ENCODE measurements at regions of chr17 and their contacts with region 1.

Region 1: GRCh38 chr17:45317112-45317928 is 500 bp upstream of the MAP3K14 start:
- DNase-seq: peak; percentile 100
- ATAC-seq: peak; percentile 84 to 85
- H3K4me3 ChIP-seq: peak overlapping the region; percentile 41 to 74 (median 62)
- H3K27ac ChIP-seq: peak overlapping the region; percentile 86 to 98 (median 92)
- H3K4me1 ChIP-seq: peaks cover 43 to 45% of the 10 kb centered on the region in 2 donors
- H3K27me3 ChIP-seq: no peaks in the 10 kb centered on the region
- CTCF ChIP-seq: peak in 1 of 5 experiments; percentile 6
- POLR2A ChIP-seq: no peak

Region 2: GRCh38 chr17:44749076-44749979 is 568.0 kb before region 1 on chr17:
- in situ Hi-C with region 1: no loop called
- intact Hi-C with region 1: no loop called
- DNase-seq: no peak
- ATAC-seq: no peak
- H3K4me3 ChIP-seq: no peak overlapping the region
- H3K27ac ChIP-seq: no peak overlapping the region
- H3K4me1 ChIP-seq: no peaks in the 10 kb centered on the region
- H3K27me3 ChIP-seq: no peaks in the 10 kb centered on the region
- CTCF ChIP-seq: no peak
- POLR2A ChIP-seq: no peak

Region 3: DNA sequence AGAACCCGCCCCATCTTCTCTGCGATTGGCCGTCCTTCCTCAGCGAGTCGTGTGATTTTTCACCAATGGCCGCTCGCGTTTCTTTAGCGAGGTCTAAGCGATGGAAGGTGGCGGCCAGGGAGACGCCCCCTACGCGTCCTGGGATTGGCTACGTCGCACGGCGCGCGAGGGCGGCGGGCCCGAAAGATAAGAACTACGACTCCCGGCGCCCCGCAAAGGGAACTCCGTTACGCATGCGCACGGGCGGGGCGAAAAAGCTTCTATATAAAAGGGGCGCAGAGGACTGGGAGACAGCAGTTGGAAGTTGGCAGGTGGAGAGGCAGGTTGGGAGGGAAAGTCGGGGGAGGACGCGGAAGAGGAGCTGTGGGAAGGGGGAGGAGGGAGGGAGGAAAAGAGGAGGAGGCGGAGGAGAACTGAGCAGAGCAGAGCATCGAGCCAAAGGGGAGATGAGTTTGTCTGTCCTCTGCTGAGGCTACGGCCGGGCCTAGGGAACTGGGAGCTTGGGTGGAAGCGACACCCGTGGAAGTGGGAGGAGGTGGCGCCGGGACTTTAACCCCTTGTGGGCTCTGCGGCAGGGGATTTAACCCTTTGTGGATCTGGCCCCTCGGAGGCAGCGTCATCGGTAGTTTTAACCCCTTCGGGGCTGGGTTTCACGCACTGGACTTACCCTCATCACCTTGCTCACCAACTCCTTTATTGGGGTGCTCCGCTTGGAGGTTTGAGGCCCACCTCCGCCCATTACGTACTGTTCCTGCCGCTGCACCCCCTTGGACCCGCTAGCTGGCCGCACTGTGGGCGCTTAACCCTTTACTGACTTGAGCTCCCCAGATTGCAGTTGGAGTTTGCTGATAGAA is 168.9 kb before region 1 on chr17 and contains the start of gene HEXIM1:
- in situ Hi-C with region 1: no loop called
- intact Hi-C with region 1: loop called (anchors 1 kb)
- DNase-seq: peak; percentile 99 to 100
- ATAC-seq: peak; percentile 70
- H3K4me3 ChIP-seq: peak within 1 kb of the TSS; percentile 80 to 88 (median 84)
- H3K27ac ChIP-seq: peak within 1 kb of the TSS; percentile 90 to 98 (median 98)
- H3K4me1 ChIP-seq: peaks cover 36 to 50% of the 10 kb centered on the region in 2 donors
- H3K27me3 ChIP-seq: no peaks in the 10 kb centered on the region
- CTCF ChIP-seq: peak in 1 of 5 experiments; percentile 5
- POLR2A ChIP-seq: peak; percentile 99 to 100
- total RNA-seq, gene HEXIM1: 26.3 to 79.6 (median 36.9) TPM

Region 4: DNA sequence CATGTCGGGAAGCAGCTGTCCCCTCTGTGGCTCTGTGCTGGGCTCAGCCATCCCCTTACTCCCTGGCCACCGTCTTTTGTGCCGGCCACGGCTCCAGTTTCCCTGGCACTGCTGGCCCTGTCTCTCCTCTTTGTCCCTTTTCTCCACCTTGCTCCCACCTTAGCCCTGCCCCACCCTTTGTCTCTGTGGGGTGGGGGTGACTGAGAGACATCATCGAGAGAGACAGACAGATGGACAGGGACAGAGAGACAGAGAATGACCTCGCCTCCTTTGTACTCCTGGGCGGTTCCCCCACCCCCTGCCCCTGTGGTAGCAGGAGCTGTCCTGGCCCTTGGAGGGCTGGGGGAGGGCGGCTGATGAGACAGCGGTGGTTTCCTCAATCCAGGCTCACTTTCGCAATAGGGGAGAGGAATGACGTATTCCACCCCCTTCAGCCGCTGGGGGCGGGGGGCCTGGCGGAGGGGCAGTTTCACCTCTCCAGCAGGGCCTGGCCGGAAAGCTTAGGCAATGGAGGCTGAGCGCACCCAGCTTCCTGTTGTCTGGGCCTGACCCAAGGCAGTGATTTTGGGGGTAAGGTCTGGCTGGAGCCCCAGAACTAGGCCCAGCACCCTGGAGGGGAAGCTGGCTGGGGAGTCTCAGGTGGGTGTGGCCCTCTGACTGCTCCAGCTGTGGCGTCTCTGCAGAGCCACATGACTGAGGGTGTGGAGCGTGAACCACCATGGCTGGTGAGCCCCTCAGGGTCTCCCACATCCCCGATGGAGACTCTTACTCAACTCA is 88.4 kb before region 1 on chr17:
- in situ Hi-C with region 1: loop called in 1 of 4 experiments (anchors 10 kb)
- intact Hi-C with region 1: no loop called
- DNase-seq: peak; percentile 76 to 83
- ATAC-seq: peak; percentile 58 to 71
- H3K4me3 ChIP-seq: no peak overlapping the region
- H3K27ac ChIP-seq: peak overlapping the region; percentile 62 to 81 (median 74)
- H3K4me1 ChIP-seq: peaks cover 38 to 40% of the 10 kb centered on the region in 2 donors
- H3K27me3 ChIP-seq: no peaks in the 10 kb centered on the region
- CTCF ChIP-seq: no peak
- POLR2A ChIP-seq: peak in 1 of 2 donors; percentile 38

Region 5: DNA sequence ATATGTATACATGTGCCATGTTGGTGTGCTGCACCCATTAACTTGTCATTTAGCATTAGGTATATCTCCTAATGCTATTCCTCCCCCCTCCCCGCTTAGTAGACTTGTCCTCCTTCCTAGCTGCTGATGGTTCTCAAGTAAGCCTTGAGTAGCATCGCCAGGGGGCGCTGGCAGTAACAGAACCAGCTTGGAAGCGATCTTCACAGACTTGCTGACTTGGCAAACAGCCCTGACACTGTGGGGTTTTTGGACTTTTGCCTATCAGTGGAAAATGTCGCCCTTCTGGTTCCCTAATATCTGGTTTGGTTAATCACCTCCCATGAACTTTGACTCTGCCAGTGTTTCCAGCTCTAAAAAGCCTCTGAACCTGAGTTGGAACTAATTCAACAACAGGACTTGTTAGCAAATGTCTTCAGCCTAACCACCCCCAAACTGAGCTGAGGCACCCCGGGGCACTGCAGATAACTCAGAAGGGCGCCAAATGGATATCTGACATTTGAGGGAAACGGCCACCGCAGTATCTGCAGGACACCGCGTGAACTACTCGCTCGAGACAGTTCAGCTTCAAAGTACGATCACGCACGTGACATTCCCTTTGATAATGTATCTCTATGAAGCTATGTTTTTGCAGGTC is 40.0 kb before region 1 on chr17:
- in situ Hi-C with region 1: loop called in 3 of 4 experiments (anchors 5 to 10 kb)
- intact Hi-C with region 1: no loop called
- DNase-seq: peak; percentile 82 to 93
- ATAC-seq: peak; percentile 65 to 74
- H3K4me3 ChIP-seq: no peak overlapping the region
- H3K27ac ChIP-seq: peak overlapping the region; percentile 88 to 100 (median 97)
- H3K4me1 ChIP-seq: peaks cover 46 to 51% of the 10 kb centered on the region in 2 donors
- H3K27me3 ChIP-seq: no peaks in the 10 kb centered on the region
- CTCF ChIP-seq: peak; percentile 81 to 92 (median 91)
- POLR2A ChIP-seq: no peak

Region 6: DNA sequence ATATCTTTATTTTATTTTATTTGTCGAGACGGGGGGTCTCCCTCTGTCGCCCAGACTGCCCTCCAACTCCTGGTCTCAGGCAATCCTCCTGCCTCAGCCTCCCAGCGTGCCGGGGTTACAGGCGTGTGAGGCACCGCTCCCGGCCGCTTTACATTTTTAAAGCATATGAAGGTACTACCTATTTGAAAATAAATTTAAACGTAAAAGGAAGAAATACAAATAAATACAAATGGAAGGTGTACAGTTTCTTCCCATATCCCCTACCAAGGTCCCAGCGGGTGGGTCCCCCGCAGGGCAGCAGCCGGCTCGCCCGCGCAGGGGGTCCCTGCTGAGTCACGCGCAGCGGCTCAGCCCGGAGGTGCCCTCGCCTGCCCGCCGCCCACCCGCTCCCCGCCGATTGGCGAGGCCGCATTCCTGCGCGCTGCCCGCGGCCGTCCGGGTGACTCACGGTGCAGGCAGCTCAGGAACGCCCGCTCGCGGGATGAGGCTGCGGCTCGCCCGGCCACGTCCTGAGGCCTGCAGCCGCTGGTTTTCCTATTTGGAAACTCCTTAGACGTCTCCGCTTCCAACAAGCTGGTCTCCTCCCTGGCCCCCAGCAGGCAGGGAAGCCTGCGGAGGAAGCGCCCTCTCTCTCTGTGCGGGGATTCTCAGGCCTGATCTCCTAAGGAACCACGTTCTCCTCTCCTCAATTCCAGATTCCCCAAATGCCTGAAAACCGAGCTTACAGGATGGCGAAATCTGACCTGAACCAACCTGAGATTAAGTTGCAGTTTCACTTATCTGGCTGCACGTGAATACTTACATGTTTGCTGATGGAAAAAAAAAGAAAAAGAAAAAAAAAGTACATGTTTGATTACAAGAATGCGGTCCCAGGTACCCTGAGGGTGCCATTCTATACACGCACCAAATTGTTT is 54.4 kb after region 1 on chr17:
- in situ Hi-C with region 1: loop called in 1 of 4 experiments (anchors 10 kb)
- intact Hi-C with region 1: loop called (anchors 5 kb)
- DNase-seq: peak; percentile 46 to 80
- ATAC-seq: peak; percentile 76 to 86
- H3K4me3 ChIP-seq: peak overlapping the region; percentile 11 to 59 (median 42)
- H3K27ac ChIP-seq: peak overlapping the region; percentile 49 to 82 (median 69)
- H3K4me1 ChIP-seq: peaks cover 15 to 25% of the 10 kb centered on the region in 2 donors
- H3K27me3 ChIP-seq: no peaks in the 10 kb centered on the region
- CTCF ChIP-seq: no peak
- POLR2A ChIP-seq: peak in 1 of 2 donors; percentile 17

Region 7: DNA sequence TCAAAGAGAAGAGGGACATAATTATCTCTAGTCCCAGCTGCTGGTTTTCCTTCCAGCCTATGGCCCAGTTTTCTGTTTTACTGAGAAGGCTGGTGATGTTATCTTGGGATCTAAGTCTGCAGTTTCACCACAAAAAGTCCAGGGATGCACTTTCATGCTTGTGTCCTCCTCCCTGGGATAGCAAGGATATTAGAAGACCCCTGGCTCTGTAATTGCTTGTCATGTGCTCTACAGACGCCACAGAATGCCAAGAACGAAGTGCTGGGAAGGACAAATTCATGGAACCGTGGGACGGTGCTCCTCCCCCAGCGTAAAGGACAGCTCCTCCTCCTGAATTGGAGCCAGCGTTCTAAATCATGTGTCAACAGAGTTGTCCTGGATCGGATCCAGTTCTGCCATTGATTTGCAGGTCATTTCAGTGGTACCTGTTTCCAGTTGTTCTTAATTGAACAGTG is 585.6 kb after region 1 on chr17:
- in situ Hi-C with region 1: no loop called
- intact Hi-C with region 1: loop called (anchors 10 kb)
- DNase-seq: peak; percentile 53 to 74
- ATAC-seq: peak; percentile 38 to 42
- H3K4me3 ChIP-seq: peak overlapping the region in 3 of 4 donors; percentile 3 to 24 (median 22)
- H3K27ac ChIP-seq: peak overlapping the region; percentile 94 to 99 (median 99)
- H3K4me1 ChIP-seq: peaks cover 78 to 89% of the 10 kb centered on the region in 2 donors
- H3K27me3 ChIP-seq: no peaks in the 10 kb centered on the region
- CTCF ChIP-seq: no peak
- POLR2A ChIP-seq: no peak